Right cardiac atrium (tissue), 5 donors: ENCODE measurements at regions of chr7 and their contacts with region 1.

Region 1: GRCh38 chr7:49635800-49636199 is 137.6 kb upstream of the VWC2 start:
- DNase-seq: no peak
- ATAC-seq: no peak
- H3K4me3 ChIP-seq: no peak overlapping the region
- H3K27ac ChIP-seq: no peak overlapping the region
- H3K4me1 ChIP-seq: peaks cover 2% of the 10 kb centered on the region
- H3K27me3 ChIP-seq: no peaks in the 10 kb centered on the region

Region 2: GRCh38 chr7:49367072-49367471 is 268.7 kb before region 1 on chr7:
- intact Hi-C with region 1: no loop called
- DNase-seq: no peak
- ATAC-seq: no peak
- H3K4me3 ChIP-seq: no peak overlapping the region
- H3K27ac ChIP-seq: no peak overlapping the region
- H3K4me1 ChIP-seq: no peaks in the 10 kb centered on the region
- H3K27me3 ChIP-seq: no peaks in the 10 kb centered on the region

Region 3: GRCh38 chr7:49776994-49777393 is 141.2 kb after region 1 on chr7:
- intact Hi-C with region 1: loop called in 2 of 4 experiments (anchors 10 kb)
- DNase-seq: no peak
- ATAC-seq: no peak
- H3K4me3 ChIP-seq: no peak overlapping the region
- H3K27ac ChIP-seq: no peak overlapping the region
- H3K4me1 ChIP-seq: no peaks in the 10 kb centered on the region
- H3K27me3 ChIP-seq: no peaks in the 10 kb centered on the region